ENCODE measurements at regions of chr2 and their contacts with region 1.

Region 1: GRCh38 chr2:202460119-202460518 is 84.0 kb downstream of the BMPR2 start:
- DNase-seq: no peak
- H3K4me3 Mint-ChIP-seq: no peak overlapping the region
- H3K27ac Mint-ChIP-seq: no peak overlapping the region
- H3K4me1 Mint-ChIP-seq: no peaks in the 10 kb centered on the region
- H3K27me3 Mint-ChIP-seq: no peaks in the 10 kb centered on the region
- CTCF ChIP-seq: no peak

Region 2: GRCh38 chr2:202442882-202443281 is 17.2 kb before region 1 on chr2:
- CTCF ChIA-PET with region 1: no interaction called
- intact Hi-C with region 1: no loop called
- DNase-seq: no peak
- H3K4me3 Mint-ChIP-seq: no peak overlapping the region
- H3K27ac Mint-ChIP-seq: no peak overlapping the region
- H3K4me1 Mint-ChIP-seq: no peaks in the 10 kb centered on the region
- H3K27me3 Mint-ChIP-seq: no peaks in the 10 kb centered on the region
- CTCF ChIP-seq: no peak

Region 3: DNA sequence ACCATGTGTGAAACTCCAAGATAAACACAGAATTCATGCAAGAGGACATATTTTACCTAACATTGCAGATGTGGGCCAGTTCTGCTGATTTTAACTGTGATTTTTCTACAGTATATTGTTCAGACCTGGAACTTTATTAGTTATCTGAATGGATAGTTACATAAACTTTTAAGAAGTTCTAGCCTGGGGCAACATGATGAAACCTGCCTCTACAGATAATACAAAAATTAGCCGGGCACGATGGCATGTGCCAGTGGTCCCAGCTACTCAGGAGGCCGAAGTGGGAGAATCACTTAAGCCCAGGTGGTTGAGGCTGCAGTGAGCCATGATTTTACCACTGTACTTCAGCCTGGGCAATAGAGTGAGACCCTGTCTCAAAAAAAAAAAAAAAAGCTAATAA is 569.2 kb after region 1 on chr2:
- CTCF ChIA-PET with region 1: interaction called, 10 read pairs
- intact Hi-C with region 1: no loop called
- DNase-seq: no peak
- H3K4me3 Mint-ChIP-seq: no peak overlapping the region
- H3K27ac Mint-ChIP-seq: no peak overlapping the region
- H3K4me1 Mint-ChIP-seq: no peaks in the 10 kb centered on the region
- H3K27me3 Mint-ChIP-seq: no peaks in the 10 kb centered on the region
- CTCF ChIP-seq: no peak